Activated CD4-positive, alpha-beta T cell treated with anti-CD3 and anti-CD28 coated beads for 36 hours (primary cell): ENCODE measurements at regions of chr17 and their contacts with region 1.

Region 1: GRCh38 chr17:28644985-28645939 is at the start of gene BLTP2:
- DNase-seq: peak; percentile 98
- ATAC-seq: peak; percentile 98
- H3K4me3 Mint-ChIP-seq: peak within 1 kb of the TSS; percentile 95
- H3K27ac Mint-ChIP-seq: peak within 1 kb of the TSS; percentile 87
- H3K4me1 Mint-ChIP-seq: peaks cover 38% of the 10 kb centered on the region
- H3K27me3 Mint-ChIP-seq: no peaks in the 10 kb centered on the region
- total RNA-seq, gene BLTP2: 138 to 152 TPM

Region 2: GRCh38 chr17:28357061-28357900 is 288.0 kb before region 1 on chr17 and contains the start of gene POLDIP2:
- CTCF ChIA-PET with region 1: interaction called, 4 read pairs
- POLR2A ChIA-PET with region 1: no interaction called
- intact Hi-C with region 1: loop called in 1 of 2 experiments (anchors 1 kb)
- DNase-seq: peak; percentile 98
- ATAC-seq: peak; percentile 99
- H3K4me3 Mint-ChIP-seq: peak within 1 kb of the TSS; percentile 80
- H3K27ac Mint-ChIP-seq: peak within 1 kb of the TSS; percentile 91
- H3K4me1 Mint-ChIP-seq: peaks cover 28% of the 10 kb centered on the region
- H3K27me3 Mint-ChIP-seq: no peaks in the 10 kb centered on the region
- total RNA-seq, gene POLDIP2: 84.9 to 98.4 TPM

Region 3: DNA sequence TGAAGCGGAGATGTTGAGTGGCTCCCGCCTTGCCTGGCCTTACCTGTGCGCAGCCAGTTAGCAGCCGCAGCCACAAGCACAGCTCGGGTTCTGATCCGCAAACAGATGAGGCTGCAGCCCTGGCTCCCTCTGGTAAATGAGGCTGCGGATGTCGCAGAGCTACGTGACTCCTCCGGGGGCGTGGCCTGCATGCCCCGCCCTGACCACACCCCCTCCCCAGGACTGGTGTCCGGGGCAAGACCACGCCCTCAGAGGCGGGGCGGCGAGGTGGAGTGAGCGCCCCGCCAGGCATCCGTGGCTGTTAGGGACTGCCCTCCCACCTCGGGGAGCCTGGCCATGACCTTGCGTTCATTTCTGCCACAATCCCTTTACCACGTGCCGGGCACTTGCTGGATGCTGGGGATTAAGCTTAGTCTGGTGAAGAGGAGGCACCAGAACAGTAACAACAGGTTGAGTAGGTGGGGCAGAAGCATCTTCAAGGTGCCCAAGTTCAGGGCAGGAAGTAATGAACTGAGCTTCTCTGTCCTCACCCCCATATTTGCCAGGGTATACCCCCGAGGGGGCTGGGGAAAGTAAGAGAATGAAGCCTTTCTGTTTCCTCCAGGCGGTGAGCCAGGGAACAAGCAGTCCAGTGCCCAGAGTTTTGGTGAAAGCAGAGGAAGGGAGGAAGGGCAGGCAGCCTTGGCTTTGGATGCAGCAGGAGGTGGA is 68.3 kb before region 1 on chr17 and contains the start of gene ALDOC:
- CTCF ChIA-PET with region 1: interaction called, 4 read pairs
- POLR2A ChIA-PET with region 1: interaction called, 6 read pairs
- intact Hi-C with region 1: loop called in 1 of 2 experiments (anchors 1 kb)
- DNase-seq: peak; percentile 99
- ATAC-seq: peak; percentile 92
- H3K4me3 Mint-ChIP-seq: peak within 1 kb of the TSS; percentile 87
- H3K27ac Mint-ChIP-seq: peak within 1 kb of the TSS; percentile 82
- H3K4me1 Mint-ChIP-seq: peaks cover 43% of the 10 kb centered on the region
- H3K27me3 Mint-ChIP-seq: no peaks in the 10 kb centered on the region
- total RNA-seq, gene ALDOC: 131 to 133 TPM

Region 4: DNA sequence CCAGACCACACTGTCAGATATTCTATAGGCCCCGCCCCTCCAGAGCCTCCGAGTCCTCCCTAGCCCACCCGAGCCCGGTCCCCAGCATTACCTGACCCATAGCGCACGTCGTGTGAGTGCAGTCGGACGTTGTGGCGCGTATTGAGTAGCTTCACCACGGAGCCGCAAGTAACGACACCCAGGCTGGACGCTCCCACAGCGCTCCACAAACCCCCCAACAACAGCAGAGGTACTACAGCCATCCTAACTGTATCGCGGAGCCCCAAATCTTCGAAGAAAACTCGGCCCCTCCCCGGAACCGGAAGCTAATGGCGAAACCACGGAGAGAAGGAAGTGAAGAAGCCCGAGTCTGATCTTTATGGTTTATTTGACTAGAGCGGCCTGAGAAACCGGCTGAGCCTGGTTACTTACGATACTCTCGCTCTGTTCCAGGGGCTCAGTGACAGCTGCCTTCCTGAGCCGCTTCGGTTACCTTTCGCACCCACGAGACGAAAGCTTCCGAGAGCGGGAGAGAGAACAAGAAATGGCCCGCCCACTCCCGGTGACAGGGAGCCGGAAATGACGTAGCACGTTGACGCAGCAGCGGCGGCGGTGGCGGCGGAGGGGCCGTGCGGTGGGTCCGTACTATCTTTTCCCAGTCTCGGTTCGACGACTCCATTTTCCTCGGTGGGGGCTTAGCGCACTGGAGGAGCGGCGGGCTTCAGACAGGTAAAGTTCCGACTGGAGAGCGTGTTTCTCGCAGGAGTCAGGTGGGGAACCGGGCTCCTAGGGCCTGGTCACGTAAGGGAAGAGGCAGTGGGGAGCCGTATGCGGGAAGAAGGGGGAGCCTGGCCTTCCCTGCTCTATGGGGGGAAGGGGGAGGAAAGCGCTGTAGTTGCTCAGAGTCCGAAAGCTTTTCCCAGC is 16.6 kb after region 1 on chr17 and contains the starts of genes SDF2 and SUPT6H:
- CTCF ChIA-PET with region 1: interaction called, 125 read pairs
- POLR2A ChIA-PET with region 1: interaction called, 23 read pairs
- intact Hi-C with region 1: loop called (anchors 1 kb)
- DNase-seq: peak; percentile 98
- ATAC-seq: peak; percentile 87
- H3K4me3 Mint-ChIP-seq: peak within 1 kb of the TSS; percentile 94
- H3K27ac Mint-ChIP-seq: peak within 1 kb of the TSS; percentile 99
- H3K4me1 Mint-ChIP-seq: peaks cover 48% of the 10 kb centered on the region
- H3K27me3 Mint-ChIP-seq: no peaks in the 10 kb centered on the region
- total RNA-seq, gene SDF2: 36.6 to 37.2 TPM
- total RNA-seq, gene SUPT6H: 80.6 to 85.8 TPM

Region 5: DNA sequence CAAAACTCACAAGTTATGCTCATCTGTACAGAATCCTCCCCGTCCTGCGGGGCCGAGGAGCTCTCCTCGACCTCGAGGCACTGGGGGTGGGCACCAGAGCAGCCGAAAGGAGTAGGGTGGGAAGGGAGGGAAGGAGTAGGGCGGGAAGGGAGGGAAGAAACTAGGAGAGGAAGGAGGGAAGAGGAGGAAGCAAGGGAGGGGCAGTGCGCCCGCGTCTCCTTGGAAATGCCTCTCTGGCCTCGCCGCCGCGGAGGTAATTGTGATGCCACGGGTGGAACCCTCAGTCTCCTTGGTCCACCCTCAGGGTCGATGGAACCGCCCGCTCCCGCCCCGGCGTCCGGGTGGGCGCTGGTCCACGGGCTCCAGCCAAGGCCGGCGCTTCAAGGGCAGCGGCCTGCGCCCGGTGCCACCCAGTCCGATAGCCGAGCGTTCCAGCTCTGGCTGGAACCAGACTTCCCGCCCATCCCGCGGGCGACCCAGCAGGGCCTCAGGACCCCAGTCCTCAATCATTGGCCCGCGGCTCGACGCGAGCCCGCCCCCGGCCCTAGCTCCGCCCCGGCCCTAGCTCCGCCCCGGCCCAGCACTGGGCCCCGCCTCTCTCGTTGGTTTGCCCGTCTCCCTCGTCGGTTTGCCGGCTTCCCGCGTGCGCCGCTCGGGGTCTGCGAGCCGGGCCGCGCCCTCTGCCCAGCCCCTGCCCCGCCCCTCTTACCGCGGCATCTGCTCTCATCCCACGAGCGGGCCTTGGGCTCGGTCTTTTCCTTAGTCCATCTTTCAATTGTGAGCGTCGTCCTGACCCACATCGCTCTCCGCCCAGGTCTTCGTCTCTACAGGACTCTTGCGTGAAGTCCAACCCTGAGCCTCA is 65.8 kb after region 1 on chr17:
- CTCF ChIA-PET with region 1: interaction called, 13 read pairs
- POLR2A ChIA-PET with region 1: interaction called, 10 read pairs
- intact Hi-C with region 1: loop called (anchors 1 to 2 kb)
- DNase-seq: peak; percentile 94
- ATAC-seq: peak; percentile 90
- H3K4me3 Mint-ChIP-seq: peak overlapping the region; percentile 80
- H3K27ac Mint-ChIP-seq: peak overlapping the region; percentile 91
- H3K4me1 Mint-ChIP-seq: peaks cover 19% of the 10 kb centered on the region
- H3K27me3 Mint-ChIP-seq: peaks cover 17% of the 10 kb centered on the region

Region 6: GRCh38 chr17:29111816-29112499 is 466.7 kb after region 1 on chr17:
- CTCF ChIA-PET with region 1: interaction called, 4 read pairs
- POLR2A ChIA-PET with region 1: no interaction called
- intact Hi-C with region 1: loop called (anchors 1 to 10 kb)
- DNase-seq: peak; percentile 86
- ATAC-seq: peak; percentile 86
- H3K4me3 Mint-ChIP-seq: no peak overlapping the region
- H3K27ac Mint-ChIP-seq: no peak overlapping the region
- H3K4me1 Mint-ChIP-seq: peaks cover 3% of the 10 kb centered on the region
- H3K27me3 Mint-ChIP-seq: no peaks in the 10 kb centered on the region